Left ventricle myocardium inferior (tissue), 1 donor: ENCODE measurements at regions of chr17 and their contacts with region 1.

Region 1: DNA sequence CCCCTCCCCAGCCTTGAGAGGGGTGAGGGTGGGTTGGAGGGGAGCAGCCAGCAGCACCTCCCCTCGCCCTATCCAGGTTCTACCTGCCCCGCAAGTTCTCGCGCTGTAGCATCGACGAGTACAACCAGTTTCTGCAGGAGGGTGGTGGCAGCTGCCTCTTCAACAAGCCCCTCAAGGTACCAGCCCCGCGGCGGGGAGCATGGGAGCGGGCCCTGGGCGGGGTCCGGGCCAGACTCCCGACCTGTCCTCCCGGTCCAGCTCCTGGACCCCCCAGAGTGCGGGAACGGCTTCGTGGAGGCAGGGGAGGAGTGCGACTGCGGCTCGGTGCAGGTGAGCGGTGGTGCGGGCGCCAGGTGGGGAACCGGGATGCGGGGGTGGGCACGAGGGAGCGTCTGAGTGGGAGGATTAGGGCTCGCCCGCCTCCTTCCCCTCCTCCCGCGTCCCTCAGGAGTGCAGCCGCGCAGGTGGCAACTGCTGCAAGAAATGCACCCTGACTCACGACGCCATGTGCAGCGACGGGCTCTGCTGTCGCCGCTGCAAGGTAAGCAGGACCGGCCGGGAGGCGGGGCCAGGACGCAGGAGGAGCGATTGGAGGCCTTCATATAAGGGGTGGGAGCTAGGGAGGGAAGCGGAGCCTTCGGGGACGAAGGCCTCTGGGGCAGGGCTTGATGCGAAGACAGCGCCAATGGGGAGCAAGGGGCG is 16.5 kb downstream of the ADAM11 start:
- DNase-seq: peak; percentile 96
- H3K4me3 ChIP-seq: peak overlapping the region; percentile 79
- H3K27ac ChIP-seq: peak overlapping the region; percentile 60
- H3K4me1 ChIP-seq: peaks cover 36% of the 10 kb centered on the region
- H3K27me3 ChIP-seq: peaks cover 25% of the 10 kb centered on the region
- CTCF ChIP-seq: no peak

Region 2: DNA sequence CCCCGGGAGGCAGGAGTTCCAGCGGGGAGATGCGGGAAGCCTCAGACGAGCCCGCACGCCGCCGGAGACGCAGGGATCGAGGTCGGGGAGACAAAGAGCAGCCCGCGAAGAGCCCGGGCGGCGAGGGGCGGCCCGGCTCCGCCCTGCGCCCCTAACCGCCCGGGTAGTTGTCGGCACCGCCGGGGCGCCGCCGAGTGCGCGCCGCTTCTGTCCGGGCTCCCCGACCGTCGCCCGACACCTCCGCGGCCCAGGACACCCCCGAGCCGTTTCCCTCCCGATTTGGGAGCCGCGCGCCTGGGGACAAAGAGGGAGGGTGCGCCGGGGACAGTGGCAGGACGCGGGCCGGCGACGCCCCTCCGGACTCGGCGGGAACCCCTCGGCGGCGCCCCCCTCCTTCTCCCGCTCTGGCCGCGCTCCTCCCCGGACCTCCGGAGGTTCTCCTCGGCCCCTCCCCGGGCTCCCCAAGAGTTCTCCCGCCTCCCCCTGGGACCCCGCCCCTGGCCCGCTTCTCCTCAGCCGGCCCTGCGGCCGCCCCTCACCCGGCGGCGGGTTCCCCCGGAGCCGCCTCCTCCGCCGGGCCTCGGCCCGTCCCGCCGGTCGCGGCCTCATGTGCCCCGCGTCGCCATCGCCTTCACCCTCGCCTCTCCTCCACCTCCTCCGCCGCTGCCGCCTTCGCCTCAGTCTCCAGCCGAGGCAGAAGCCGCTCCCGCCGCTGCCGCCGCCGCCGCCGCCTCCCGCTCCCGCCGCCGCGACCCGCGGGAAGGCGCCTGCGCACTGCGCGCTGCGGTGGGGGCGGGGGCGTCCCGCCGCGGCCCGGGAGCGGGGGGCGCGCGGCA is 54.5 kb after region 1 on chr17 and contains the start of gene GJC1:
- intact Hi-C with region 1: no loop called
- DNase-seq: peak; percentile 64
- H3K4me3 ChIP-seq: peak within 1 kb of the TSS; percentile 80
- H3K27ac ChIP-seq: peak within 1 kb of the TSS; percentile 94
- H3K4me1 ChIP-seq: peaks cover 58% of the 10 kb centered on the region
- H3K27me3 ChIP-seq: peaks cover 37% of the 10 kb centered on the region
- CTCF ChIP-seq: no peak
- total RNA-seq, gene GJC1: 18.8 TPM

Region 3: DNA sequence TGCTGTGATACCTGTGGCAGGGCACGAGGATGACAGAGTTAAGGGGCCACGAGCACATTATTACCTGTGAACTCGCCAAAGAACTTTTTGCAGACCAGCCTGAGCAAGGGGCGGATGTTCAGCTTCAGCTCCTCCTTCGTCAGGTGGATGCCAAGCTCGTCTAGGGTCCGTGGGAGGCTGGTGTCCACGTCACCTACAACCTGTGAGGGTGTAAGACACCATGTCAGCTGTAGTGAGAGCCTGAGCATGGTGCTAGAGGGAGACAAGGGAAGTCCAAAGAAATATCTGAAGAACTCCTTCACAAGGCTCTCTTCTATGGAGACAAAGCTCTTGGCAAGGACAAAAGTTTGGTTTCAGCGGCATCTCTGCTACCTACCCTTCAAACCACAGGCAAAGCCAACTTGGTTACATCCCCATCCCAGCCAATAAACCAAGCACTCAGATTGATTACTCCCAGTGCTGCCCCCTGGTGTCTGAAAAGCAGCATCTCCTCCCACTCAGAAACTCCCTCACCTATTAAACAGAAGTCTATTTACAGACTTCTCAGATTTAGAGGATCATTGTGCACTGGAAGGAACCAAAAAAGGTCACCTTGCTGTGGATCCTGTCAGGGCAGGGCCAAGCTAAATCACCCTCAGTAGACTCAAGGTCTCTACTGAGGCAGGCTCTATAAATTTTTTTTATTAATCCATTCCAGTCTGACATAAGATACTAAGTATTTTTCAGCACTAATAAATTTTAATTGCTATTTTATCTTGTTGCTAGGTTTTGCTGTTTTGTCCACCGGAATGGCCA is 89.8 kb after region 1 on chr17:
- intact Hi-C with region 1: loop called (anchors 2 kb)
- DNase-seq: peak; percentile 50
- H3K4me3 ChIP-seq: no peak overlapping the region
- H3K27ac ChIP-seq: peak overlapping the region; percentile 29
- H3K4me1 ChIP-seq: peaks cover 24% of the 10 kb centered on the region
- H3K27me3 ChIP-seq: no peaks in the 10 kb centered on the region
- CTCF ChIP-seq: peak; percentile 91